ENCODE measurements at regions of chr7 and their contacts with region 1.

Region 1: DNA sequence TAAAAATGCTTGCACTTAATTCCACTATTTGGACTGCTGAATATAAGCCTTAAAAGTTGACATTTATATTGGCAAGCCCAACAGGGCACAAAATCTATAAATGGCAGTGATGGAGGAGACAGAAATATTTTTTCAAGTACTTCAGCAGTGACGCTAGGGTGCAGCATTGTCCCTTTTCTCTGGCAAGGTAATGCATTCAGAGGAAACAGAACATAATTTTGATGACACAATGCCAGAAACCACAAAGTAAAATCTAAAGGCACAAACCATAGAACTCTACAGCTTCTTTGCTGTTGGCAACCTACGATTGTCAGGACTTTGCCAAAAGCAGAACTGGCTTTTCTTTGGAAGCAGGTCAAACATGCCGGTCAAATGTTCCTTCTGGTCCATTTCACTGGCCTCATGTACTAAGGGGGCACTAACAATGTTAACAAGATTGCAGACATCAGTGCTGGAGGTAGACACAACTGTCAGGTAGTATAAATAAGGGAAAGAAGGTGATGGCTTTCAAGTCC is 30.9 kb upstream of the FAM133B start:
- DNase-seq: peak; percentile 88
- H3K4me3 ChIP-seq: no peak overlapping the region
- H3K27ac ChIP-seq: no peak overlapping the region
- H3K4me1 ChIP-seq: peaks cover 14% of the 10 kb centered on the region
- H3K27me3 ChIP-seq: no peaks in the 10 kb centered on the region
- CTCF ChIP-seq: peak; percentile 83

Region 2: DNA sequence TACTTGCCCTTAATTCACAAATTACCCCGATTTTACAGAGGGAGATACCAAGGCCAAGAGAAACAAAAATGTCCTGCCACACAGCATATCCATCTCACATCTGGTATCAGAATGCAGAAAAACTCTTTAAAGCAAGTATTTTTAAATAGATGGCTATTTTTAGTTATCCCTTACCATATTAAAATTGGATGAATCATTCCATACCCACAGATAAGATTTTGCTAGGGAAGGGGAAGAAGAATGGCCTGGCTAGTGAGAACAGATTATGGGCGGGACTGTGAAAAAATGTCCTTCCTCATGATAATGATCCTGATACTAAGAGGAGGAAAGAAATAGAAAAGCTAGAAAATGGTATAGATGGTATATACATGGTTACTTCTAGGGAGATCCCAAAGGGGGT is 254.4 kb before region 1 on chr7:
- CTCF ChIA-PET with region 1: no interaction called
- POLR2A ChIA-PET with region 1: no interaction called
- intact Hi-C with region 1: no loop called
- DNase-seq: no peak
- H3K4me3 ChIP-seq: no peak overlapping the region
- H3K27ac ChIP-seq: no peak overlapping the region
- H3K4me1 ChIP-seq: no peaks in the 10 kb centered on the region
- H3K27me3 ChIP-seq: no peaks in the 10 kb centered on the region
- CTCF ChIP-seq: no peak

Region 3: DNA sequence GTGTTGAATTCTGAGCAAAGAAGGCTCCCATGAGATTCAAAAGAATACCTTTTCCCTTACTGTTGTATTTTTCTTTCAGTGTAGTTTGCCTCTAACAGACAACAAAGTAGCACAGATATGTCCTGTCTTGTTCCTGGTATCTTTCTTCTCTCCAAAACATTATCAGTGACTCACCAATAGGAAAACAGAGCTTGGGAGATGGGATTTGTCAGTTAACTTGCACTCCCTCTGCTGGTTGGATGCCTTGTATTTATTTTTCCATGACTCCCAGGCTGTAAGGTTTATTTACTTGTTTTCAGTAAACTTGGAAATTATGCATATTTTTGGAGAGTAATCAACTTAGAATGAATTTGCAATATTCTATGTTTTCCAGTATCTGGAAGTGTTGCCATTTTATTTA is 367.0 kb after region 1 on chr7:
- CTCF ChIA-PET with region 1: no interaction called
- POLR2A ChIA-PET with region 1: no interaction called
- intact Hi-C with region 1: loop called (anchors 2 kb)
- DNase-seq: peak; percentile 53
- H3K4me3 ChIP-seq: no peak overlapping the region
- H3K27ac ChIP-seq: no peak overlapping the region
- H3K4me1 ChIP-seq: no peaks in the 10 kb centered on the region
- H3K27me3 ChIP-seq: peaks cover 3% of the 10 kb centered on the region
- CTCF ChIP-seq: peak; percentile 56

Region 4: DNA sequence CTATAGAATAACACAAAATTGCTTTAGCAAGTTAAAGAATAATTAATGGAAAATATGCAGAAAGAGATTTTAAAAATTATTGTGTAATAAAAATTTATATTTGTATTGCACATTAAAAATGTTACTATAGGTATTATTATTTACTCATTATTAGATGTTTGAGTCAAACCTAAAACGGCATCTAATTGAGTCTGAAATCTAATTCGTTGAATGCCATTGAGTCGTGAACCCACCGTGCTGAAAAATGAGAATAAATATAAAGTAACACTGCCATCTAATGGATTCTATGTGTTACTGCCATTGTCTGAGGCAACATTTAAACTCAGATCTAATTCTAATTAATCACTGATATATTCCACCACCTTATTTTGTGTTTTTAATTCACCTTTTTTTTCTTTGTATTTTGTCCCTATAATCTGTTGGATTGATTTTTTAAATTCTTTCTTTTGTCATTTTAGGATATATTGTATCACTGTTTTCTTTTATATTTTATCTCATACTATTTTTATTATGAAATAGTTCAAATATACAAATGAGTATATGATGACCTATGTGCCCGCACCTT is 434.5 kb after region 1 on chr7:
- CTCF ChIA-PET with region 1: no interaction called
- POLR2A ChIA-PET with region 1: no interaction called
- intact Hi-C with region 1: loop called (anchors 2 kb)
- DNase-seq: peak; percentile 62
- H3K4me3 ChIP-seq: no peak overlapping the region
- H3K27ac ChIP-seq: no peak overlapping the region
- H3K4me1 ChIP-seq: no peaks in the 10 kb centered on the region
- H3K27me3 ChIP-seq: peaks cover 30% of the 10 kb centered on the region
- CTCF ChIP-seq: peak; percentile 80

Region 5: GRCh38 chr7:93097388-93097787 is 476.3 kb after region 1 on chr7:
- CTCF ChIA-PET with region 1: no interaction called
- POLR2A ChIA-PET with region 1: no interaction called
- intact Hi-C with region 1: no loop called
- DNase-seq: no peak
- H3K4me3 ChIP-seq: no peak overlapping the region
- H3K27ac ChIP-seq: no peak overlapping the region
- H3K4me1 ChIP-seq: no peaks in the 10 kb centered on the region
- H3K27me3 ChIP-seq: peaks cover 39% of the 10 kb centered on the region
- CTCF ChIP-seq: no peak

Region 6: DNA sequence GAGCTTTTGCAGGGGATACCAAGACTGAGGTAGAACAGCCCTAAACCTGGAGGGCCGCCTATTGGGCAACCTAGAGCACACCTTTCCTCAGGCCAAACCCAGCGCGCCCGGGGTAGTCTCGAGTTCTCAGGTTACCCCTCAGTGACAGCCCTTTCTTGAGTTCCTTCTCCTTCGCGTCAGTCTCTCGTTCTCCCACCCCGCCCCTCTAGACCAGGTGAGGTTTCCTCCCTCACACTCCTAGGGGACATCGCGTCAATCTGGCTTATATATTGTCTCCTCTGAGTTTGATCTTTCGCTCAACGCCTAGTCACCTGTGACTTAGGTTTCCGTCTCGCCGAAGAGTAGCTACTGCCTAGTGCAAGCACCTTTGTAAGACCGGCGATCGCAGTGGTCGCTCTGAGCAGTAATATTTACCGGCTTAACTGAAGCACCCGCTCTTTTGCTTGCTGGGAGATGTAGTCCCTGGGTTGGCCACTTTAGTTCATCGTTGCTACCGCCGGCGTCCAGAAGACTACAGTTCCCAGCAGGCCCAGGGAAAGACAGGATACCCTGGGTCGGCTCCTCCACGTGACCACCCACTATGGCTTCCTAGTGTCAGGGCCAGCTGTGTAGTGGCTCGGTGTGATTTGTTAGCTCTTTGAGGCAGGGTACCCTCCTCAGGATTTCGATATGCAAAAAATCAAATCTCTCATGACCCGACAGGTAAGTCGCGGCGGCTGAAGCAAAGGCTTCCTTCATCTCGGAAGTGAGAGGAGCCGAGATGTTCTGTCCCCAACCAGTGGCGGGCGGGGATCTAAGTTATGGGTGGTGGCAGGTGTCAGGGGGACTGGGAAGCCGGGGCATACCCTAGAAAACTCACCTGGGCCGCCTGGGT is 611.0 kb after region 1 on chr7 and contains the start of gene VPS50:
- CTCF ChIA-PET with region 1: no interaction called
- POLR2A ChIA-PET with region 1: no interaction called
- intact Hi-C with region 1: loop called (anchors 10 kb)
- DNase-seq: peak; percentile 98
- H3K4me3 ChIP-seq: peak within 1 kb of the TSS; percentile 71
- H3K27ac ChIP-seq: no peak within 1 kb of the TSS
- H3K4me1 ChIP-seq: peaks cover 4% of the 10 kb centered on the region
- H3K27me3 ChIP-seq: no peaks in the 10 kb centered on the region
- CTCF ChIP-seq: no peak
- total RNA-seq, gene VPS50: 18.1 and 19.0 TPM in 2 replicates

Measured in A673 (cell line).